Activated naive CD4-positive, alpha-beta T cell treated with anti-CD3 and anti-CD28 coated beads for 36 hours (primary cell): ENCODE measurements at regions of chr2 and their contacts with region 1.

Region 1: GRCh38 chr2:240832205-240832727 is 12.2 kb upstream of the KIF1A start:
- DNase-seq: peak; percentile 96
- H3K4me3 Mint-ChIP-seq: peak overlapping the region; percentile 70
- H3K27ac Mint-ChIP-seq: no peak overlapping the region
- H3K4me1 Mint-ChIP-seq: peaks cover 5% of the 10 kb centered on the region
- H3K27me3 Mint-ChIP-seq: peaks cover 17% of the 10 kb centered on the region

Region 2: GRCh38 chr2:240820607-240821428 is 11.4 kb before region 1 on chr2:
- CTCF ChIA-PET with region 1: no interaction called
- intact Hi-C with region 1: loop called (anchors 1 kb)
- DNase-seq: no peak
- H3K4me3 Mint-ChIP-seq: peak overlapping the region; percentile 69
- H3K27ac Mint-ChIP-seq: no peak overlapping the region
- H3K4me1 Mint-ChIP-seq: peaks cover 9% of the 10 kb centered on the region
- H3K27me3 Mint-ChIP-seq: peaks cover 56% of the 10 kb centered on the region

Region 3: DNA sequence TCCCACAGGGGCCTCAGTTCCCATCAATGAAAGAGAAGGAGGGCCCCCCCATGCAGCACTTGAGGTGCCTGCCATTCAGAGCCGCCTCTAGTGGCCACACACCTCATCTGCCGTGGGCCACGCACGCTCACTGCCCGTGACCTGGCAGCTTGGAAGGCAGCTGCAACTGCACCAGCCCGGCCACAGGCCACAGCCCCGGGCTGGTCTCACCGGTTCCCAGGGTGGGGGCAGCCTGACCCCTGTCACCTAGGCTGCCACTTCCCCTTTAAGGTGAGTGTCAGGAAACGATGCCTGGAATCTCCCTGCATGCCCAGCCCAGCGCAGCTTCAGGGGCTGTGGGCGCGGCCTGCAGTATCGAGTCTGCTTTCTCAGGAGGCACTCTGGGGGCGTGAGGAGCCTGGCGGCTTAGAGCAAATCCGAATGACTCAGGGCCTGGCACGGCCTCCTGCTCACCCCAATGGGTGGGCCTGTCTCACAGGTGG is 61.1 kb after region 1 on chr2:
- CTCF ChIA-PET with region 1: no interaction called
- intact Hi-C with region 1: no loop called
- DNase-seq: no peak
- H3K4me3 Mint-ChIP-seq: no peak overlapping the region
- H3K27ac Mint-ChIP-seq: no peak overlapping the region
- H3K4me1 Mint-ChIP-seq: no peaks in the 10 kb centered on the region
- H3K27me3 Mint-ChIP-seq: no peaks in the 10 kb centered on the region